RWPE1 (cell line): ENCODE measurements at regions of chr6 and their contacts with region 1.

Region 1: DNA sequence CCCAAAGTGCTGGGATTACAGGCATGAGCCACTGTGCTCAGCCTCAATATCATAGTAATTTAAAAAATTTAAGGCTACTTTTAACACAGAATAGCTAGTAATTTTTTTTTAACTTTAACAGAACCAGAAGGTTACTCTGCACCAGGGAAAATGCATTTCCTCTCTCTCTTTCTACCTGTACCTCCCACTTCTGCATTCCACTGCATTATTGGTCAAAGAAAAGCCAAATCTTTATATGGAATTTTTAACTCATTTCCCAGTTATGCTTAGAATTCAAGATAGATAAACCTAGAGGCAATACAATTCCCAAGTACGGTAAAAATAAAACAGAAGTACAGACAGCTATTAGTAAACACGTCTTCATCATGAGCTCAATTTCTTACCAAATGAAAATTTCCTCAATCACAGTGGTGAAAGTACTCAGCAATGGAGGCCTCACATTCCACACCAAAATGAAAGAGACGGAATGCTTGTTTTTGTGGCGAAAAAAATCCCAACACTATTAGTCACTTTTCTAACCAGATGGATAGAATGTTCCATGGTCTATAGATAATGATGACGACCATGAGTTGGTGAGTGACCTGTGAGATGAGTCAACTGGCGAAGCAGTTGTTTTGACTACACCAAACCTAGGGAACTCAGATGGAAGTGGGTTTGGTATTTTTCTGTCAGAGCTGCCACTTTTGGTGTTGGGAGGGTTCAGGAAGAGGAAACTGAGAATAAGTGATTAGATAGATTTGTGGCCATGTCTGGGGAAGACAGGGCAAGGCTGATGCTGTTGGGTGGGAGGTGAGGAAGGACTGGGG is 104.7 kb upstream of the SGK1 start:
- DNase-seq: peak; percentile 89
- H3K27ac ChIP-seq: peak overlapping the region; percentile 83
- CTCF ChIP-seq: no peak

Region 2: DNA sequence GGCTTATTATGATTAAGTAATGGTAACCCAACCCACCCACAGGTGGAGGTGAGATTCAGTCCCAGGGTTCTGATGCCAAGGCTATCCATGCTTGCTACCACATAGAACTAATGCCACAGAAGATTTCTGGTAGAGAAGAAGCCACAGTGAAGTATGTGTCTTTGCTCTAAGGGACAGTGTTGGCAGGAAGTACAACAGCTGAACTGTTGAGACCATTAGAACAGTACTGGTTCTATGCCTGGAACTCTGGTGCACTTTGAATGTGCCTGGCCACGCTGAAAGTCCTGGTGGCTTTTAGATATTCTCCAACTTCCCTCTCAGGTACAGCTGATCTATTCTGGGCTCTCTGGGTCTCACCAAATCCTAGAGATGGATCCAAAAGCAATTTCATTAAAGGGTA is 1917.5 kb before region 1 on chr6:
- CTCF ChIA-PET with region 1: no interaction called
- POLR2A ChIA-PET with region 1: interaction called, 25 read pairs
- DNase-seq: no peak
- H3K27ac ChIP-seq: no peak overlapping the region
- CTCF ChIP-seq: no peak

Region 3: DNA sequence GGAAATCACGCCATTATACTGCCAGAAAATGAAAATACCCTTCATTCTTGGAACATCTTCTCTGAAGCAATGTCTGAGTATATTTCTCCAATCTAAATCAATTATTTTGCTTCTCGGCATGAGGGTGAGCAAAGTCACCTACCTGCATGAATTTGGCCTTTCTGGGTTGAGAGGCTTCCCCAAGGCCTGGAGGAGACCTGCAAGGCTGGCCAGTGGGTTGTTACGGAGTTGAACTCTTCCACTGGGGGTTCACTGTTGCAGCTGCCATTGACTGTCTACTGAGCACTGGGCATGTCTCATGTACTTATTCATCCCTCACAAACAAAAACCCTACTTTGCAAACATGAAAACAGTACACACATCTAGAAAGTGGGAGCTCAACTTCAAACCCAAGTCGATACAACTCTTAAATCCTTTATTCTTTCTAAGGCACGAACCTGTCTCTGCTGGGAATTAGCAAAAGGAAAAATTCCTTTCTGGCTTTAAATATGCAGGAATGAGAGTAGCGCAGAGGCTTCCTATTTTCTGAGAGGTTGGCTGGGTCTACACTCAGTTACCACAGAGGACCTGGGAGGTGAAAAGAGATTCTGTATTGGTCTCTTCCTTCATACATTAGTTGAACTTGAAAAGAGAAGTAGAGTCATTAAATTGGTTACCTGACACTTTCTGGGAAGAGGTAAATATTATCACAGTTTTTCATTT is 17.1 kb before region 1 on chr6:
- CTCF ChIA-PET with region 1: interaction called, 3 read pairs
- POLR2A ChIA-PET with region 1: interaction called, 12 read pairs
- DNase-seq: no peak
- H3K27ac ChIP-seq: no peak overlapping the region
- CTCF ChIP-seq: no peak